Calu3 (cell line): ENCODE measurements at regions of chr7 and their contacts with region 1.

Region 1: GRCh38 chr7:151152643-151153513 is 14.6 kb downstream of the GBX1 start:
- DNase-seq: no peak
- H3K4me3 Mint-ChIP-seq: no peak overlapping the region
- H3K27ac Mint-ChIP-seq: no peak overlapping the region
- H3K4me1 Mint-ChIP-seq: peaks cover 6% of the 10 kb centered on the region
- H3K27me3 Mint-ChIP-seq: peaks cover 16% of the 10 kb centered on the region
- CTCF ChIP-seq: no peak

Region 2: DNA sequence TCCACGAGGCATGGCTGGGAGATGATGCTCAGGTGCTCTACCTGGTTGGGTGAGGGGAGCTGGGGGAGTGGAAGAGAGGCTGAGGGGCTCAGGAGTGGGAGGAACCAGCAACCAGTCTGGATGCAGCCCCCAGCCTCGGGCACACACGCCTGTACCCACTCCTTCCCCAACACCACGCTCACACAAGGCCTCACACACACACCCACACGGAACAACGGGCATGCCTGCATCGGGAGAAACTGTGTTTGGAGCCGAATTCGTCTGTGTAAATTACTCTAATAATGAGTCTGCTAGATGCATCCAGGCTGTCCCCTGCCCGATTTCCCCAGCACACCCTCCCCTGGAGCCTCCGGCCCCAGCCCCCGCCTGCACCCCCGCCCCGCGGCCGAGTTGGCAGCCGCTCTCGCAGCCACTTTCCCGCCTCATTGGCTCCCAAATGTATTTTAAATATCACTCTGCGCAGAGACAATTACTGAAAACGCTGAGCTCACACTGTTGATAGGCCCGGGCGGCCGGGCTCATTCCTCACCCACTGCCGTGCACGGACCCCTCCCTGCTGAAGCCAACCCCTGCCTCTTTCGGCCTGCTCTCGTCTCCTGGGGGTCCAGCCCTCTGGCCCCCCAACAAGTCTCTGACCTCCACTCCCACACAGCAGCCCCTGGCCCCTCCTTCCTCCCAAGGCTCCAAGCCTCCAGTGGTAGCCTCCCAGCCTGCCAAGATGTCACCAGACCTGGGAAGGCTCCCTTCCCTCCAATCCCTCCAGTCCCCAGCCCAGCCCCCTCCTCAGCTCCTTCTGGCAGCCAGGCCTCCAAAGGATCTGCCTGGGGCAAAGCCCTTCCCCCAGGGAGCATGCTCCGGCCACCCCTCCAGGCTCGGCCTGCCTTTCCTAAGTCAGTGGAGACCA is 46.3 kb after region 1 on chr7:
- CTCF ChIA-PET with region 1: interaction called, 11 read pairs
- intact Hi-C with region 1: no loop called
- DNase-seq: no peak
- H3K4me3 Mint-ChIP-seq: no peak overlapping the region
- H3K27ac Mint-ChIP-seq: no peak overlapping the region
- H3K4me1 Mint-ChIP-seq: no peaks in the 10 kb centered on the region
- H3K27me3 Mint-ChIP-seq: no peaks in the 10 kb centered on the region
- CTCF ChIP-seq: no peak